ENCODE measurements at regions of chr19 and their contacts with region 1.

Region 1: DNA sequence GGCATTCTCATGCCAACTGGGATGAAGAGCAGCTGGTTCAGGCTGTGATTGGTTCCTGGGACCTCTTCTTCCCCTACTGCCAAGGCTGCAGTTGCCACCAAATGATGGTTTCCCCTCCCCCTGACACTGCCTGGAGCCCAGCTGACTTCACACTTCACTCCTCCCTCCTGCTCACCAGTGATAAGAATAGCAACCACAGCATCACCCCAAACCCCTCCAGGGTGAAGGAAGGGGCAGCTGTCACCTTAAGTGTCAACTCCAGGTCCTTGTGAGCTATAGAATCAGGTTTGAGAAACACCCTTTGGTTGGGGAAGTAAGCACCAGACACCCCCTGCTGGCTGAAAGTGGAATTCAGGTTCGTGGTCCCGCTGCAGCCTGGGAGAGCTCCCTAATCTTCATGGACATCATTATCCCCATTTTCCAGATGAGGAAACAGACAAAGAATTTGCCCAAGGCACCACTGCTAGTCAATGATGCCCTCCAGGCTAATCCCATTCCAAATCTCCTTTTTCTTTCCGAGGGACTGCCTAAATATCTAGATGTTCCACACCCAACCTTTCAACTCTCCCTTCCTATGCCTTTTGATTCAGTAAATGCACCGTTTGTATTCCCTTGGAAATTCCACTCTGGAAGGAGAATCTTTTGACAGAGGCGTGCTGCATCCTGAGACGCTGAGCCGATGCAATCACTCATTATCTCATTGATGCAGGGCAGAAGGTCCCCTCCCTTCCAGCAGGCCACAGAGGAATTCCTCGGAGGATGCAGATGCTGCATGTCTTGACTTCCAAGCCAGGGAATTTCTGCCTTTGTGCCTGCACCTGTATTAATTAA is 50.6 kb upstream of the UQCRFS1 start:
- DNase-seq: no peak

Region 2: GRCh38 chr19:28737021-28737895 is 526.3 kb before region 1 on chr19:
- intact Hi-C with region 1: loop called in 1 of 2 experiments (anchors 5 kb)
- DNase-seq: no peak

Region 3: GRCh38 chr19:29923653-29924052 is 660.1 kb after region 1 on chr19:
- intact Hi-C with region 1: no loop called
- DNase-seq: no peak

Measured in posterior vena cava (tissue), 2 donors.